HepG2 (cell line): ENCODE measurements at regions of chr20 and their contacts with region 1.

Region 1: DNA sequence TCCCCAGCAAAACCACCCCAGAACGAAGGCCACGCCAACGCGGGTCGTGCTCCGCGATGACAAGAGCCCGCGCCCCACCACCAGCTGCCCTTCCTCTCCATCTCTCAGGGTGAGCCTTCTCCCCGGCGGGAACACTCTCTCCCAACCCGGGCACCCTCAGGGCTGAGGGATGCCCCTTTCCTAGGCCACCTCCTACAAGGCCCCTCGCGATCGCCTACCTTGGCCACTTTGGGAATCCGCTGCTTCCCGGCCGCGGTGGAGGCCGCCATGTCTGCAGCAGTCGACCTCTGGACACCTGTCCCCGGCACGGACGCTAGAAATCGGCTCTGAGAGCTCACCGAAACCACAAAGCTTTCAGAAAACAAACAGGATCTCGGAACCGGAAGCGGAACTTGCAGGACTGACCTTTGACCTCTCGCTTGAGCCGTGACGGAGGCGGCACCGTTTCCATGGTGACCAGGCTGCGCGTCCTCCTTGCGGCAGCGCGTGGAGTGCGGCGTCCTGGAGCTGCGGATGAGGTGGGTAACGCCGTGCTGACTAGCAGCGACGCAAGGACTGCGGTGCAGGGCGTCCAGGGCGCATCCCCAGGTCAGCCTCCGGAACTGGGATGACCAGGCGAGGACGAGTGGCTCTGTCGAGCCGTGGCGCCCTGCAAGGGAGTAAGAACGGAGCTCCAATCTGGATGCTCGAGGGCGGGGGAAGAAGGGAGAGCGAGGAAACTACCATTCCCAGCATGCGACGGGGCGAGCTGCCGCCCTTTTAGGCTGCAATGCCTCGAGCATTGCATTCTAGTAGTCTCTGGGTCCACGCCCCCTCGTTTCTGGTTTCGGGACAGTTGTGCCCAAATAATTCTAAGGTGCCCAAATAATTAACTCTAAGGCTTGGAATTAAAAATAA is at the starts of genes CFAP61 and CRNKL1:
- DNase-seq: peak; percentile 99
- ATAC-seq: peak; percentile 97
- H3K4me3 ChIP-seq: peak within 1 kb of the TSS; percentile 87 to 94 (median 89)
- H3K27ac ChIP-seq: peak within 1 kb of the TSS; percentile 84
- H3K4me1 ChIP-seq: peaks cover 19% of the 10 kb centered on the region
- H3K27me3 ChIP-seq: peaks cover 0 to 4% of the 10 kb centered on the region in 2 experiments; a peak in 2 of 5 replicates
- CTCF ChIP-seq: peak; percentile 60
- EP300 ChIP-seq: no peak
- POLR2A ChIP-seq: peak; percentile 96
- RAD21 ChIP-seq: peak; percentile 37
- total RNA-seq, gene CFAP61: 0.27 TPM in 1 of 2 replicates, not detected in the other
- total RNA-seq, gene CRNKL1: 64.5 and 103 TPM in 2 replicates

Region 2: DNA sequence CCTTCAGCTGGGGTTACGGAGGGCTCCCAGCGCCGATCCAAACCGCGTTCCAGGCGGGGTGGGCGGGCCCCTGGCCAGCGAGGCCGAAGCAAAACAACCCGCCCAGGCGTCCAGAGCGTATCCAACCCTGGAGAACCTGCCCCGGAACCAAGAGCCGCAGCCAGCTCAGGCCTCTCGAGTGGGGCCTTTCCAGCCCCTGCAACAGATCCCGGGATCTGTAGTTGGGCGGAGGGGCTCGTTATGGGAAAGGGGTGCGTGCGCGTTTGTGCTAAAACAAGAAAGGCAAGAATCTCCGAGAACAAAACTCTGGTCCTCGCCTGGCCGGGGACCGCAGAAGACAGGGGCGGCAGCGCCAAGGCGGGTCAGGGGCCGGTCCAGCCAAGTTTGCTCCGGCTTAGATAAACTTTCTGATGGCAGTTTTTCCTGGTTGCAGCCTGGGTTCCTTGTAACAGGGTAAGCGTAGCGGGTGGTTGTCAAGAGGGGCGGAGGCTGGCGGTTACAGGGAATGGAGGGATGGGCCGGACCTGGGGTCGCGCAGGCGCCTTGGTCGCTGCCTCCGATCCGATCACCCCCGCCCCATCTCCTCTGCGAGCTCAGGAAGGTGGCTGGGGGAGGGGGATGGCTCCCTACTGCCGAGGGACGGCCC is 294.7 kb before region 1 on chr20:
- CTCF ChIA-PET with region 1: no interaction called
- POLR2A ChIA-PET with region 1: interaction called, 18 read pairs
- in situ Hi-C with region 1: no loop called
- intact Hi-C with region 1: no loop called
- DNase-seq: peak; percentile 86
- ATAC-seq: peak; percentile 82
- H3K4me3 ChIP-seq: peak overlapping the region; percentile 61 to 85 (median 70)
- H3K27ac ChIP-seq: peak overlapping the region; percentile 61
- H3K4me1 ChIP-seq: peaks cover 37% of the 10 kb centered on the region
- H3K27me3 ChIP-seq: peaks cover 0 to 24% of the 10 kb centered on the region in 2 experiments; a peak in 3 of 5 replicates
- CTCF ChIP-seq: peak; percentile 20; the same call in 1 of the 2 replicates
- EP300 ChIP-seq: no peak; a peak in 1 of 4 replicates
- POLR2A ChIP-seq: peak in 1 of 2 experiments; percentile 13; a peak in 1 of 4 replicates
- RAD21 ChIP-seq: no peak

Region 3: DNA sequence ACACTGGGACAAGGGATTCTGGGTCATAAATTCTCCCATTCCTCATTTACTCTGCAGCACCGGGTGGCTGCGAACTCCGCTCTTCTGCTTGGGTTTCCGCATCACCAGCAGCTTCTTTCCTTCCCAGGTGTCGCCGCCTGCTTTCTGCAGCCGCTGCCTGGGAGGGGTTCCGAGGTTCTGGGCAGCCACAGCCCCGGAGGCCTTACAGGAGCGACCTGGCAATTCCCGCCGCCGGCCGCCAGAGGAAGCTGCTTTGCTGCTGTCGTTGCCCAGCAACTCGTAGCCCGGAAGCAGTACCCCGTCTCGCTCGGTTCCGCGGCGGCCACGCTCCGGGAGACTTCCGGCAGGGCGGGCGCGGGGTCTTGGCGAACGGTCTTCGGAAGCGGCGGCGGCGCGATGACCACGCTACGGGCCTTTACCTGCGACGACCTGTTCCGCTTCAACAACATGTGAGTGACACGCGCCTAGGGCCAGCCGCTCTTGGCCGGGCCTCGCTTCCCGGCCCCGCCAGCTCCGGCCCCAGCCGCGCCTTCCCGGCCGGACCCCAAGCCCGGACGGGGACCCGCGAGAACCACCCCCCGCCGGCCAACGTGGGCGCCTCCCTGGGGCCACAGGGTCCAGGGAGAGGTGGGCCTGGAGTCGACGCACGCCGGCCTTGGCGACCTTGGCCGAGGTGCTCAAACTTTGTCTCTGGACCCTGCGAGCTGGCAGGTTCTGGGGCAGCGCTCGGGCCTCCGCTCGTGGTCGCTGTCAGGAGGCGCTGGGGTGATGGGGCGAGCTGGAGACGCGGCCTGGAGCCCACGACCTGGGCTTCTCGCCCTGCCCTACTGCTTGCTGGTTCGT is 35.1 kb before region 1 on chr20 and contains the start of gene NAA20:
- CTCF ChIA-PET with region 1: no interaction called
- POLR2A ChIA-PET with region 1: interaction called, 53 read pairs
- in situ Hi-C with region 1: no loop called
- intact Hi-C with region 1: loop called (anchors 1 kb)
- DNase-seq: peak; percentile 94
- ATAC-seq: peak; percentile 96
- H3K4me3 ChIP-seq: peak within 1 kb of the TSS; percentile 72 to 95 (median 82)
- H3K27ac ChIP-seq: peak within 1 kb of the TSS; percentile 82
- H3K4me1 ChIP-seq: peaks cover 76% of the 10 kb centered on the region
- H3K27me3 ChIP-seq: no peaks in the 10 kb centered on the region; a peak in 1 of 5 replicates
- CTCF ChIP-seq: peak; percentile 98
- EP300 ChIP-seq: peak in 1 of 2 experiments; percentile 36; a peak in 2 of 4 replicates
- POLR2A ChIP-seq: peak; percentile 36 to 87; a peak in 3 of 4 replicates
- RAD21 ChIP-seq: peak; percentile 89
- total RNA-seq, gene NAA20: 82.8 and 114 TPM in 2 replicates

Region 4: DNA sequence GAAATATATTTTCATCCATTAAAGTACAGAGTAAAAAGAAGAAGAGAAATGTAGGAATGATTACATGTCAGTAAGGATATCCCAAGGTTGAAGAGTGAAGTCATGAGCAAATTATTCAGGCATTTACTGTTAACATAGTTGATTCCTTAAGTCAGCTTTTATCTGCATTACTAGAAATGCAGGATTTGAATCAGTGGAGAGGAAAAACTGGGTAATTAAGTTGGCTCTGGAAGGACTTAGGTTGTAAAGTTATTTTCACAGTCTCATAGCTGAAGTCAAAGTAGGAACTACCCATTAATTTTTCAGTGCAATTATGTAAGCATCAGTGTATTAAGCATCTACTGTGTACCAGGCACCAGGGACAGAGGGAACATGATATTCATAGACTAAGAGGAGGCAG is 27.4 kb before region 1 on chr20:
- CTCF ChIA-PET with region 1: no interaction called
- POLR2A ChIA-PET with region 1: interaction called, 14 read pairs
- in situ Hi-C with region 1: no loop called
- intact Hi-C with region 1: no loop called
- DNase-seq: no peak
- ATAC-seq: no peak
- H3K4me3 ChIP-seq: no peak overlapping the region
- H3K27ac ChIP-seq: no peak overlapping the region
- H3K4me1 ChIP-seq: peaks cover 19% of the 10 kb centered on the region
- H3K27me3 ChIP-seq: no peaks in the 10 kb centered on the region
- CTCF ChIP-seq: no peak
- EP300 ChIP-seq: no peak
- POLR2A ChIP-seq: no peak
- RAD21 ChIP-seq: no peak

Region 5: DNA sequence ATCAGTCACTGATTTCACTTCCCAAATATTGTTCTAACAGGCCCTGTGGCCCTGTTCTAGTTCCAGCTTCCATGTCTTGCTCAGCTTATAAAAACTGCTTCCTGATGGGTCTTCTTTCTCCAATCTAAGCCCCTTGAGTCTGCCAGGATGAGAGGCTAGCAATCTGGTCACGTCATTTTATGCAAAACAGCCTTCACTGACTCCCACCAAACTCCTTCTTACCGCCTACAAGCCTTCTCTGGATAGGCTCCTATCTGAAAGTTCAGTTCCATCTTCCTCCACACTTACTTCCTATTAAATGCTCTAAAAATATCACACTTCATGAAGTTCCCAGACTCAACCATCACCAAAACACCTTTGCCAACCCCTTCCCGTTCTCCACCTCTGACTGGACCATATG is 15.6 kb before region 1 on chr20:
- CTCF ChIA-PET with region 1: no interaction called
- POLR2A ChIA-PET with region 1: interaction called, 11 read pairs
- in situ Hi-C with region 1: no loop called
- intact Hi-C with region 1: no loop called
- DNase-seq: no peak
- ATAC-seq: no peak
- H3K4me3 ChIP-seq: no peak overlapping the region
- H3K27ac ChIP-seq: no peak overlapping the region
- H3K4me1 ChIP-seq: no peaks in the 10 kb centered on the region
- H3K27me3 ChIP-seq: no peaks in the 10 kb centered on the region
- CTCF ChIP-seq: no peak
- EP300 ChIP-seq: no peak
- POLR2A ChIP-seq: no peak
- RAD21 ChIP-seq: no peak